ENCODE measurements at regions of chr17 and their contacts with region 1.

Region 1: DNA sequence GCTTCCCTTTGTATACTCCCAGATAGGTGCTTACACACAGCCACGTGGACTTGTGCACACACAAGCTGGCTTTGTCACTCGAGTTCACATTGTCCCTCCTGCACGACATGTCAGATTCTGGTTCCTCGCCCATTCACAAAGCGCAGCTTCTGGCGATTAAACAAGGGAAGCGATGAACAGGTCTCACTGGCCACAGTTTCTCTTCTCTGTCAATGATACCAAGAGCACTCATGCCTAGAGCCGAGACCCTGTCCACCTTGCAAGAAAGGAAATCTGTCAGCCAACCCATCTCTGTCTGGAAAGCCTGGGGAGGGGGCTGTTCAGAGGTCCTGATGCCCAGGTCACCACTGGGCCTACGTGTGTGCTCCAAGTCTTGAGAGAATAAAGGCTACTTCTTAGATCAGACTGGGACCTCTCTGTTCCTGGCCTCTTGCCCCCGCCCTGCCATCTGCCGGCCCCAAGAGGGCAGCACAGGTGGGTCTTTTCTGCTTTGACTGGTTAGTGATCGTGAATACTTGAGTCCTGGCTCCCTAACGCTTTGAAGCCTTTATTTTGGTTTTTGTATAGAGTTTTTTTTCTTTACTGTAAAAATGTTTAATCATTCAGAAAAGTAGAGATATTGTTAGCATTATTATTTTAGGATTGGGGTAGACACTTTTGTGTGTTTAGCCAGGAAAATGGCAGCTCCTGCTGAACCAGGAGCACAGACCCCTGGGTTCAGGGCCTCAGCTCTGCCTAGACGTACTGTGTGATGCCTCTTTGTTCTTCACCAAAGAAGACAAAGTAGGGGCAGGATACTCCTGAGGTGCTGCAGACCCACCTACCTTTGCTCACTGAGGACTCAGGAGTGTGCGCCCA is 104.7 kb downstream of the MRM1 start:
- DNase-seq: peak; percentile 78
- ATAC-seq: peak; percentile 92
- H3K4me3 Mint-ChIP-seq: no peak overlapping the region
- H3K27ac Mint-ChIP-seq: no peak overlapping the region
- H3K4me1 Mint-ChIP-seq: no peaks in the 10 kb centered on the region
- H3K27me3 Mint-ChIP-seq: peaks cover 26% of the 10 kb centered on the region

Region 2: DNA sequence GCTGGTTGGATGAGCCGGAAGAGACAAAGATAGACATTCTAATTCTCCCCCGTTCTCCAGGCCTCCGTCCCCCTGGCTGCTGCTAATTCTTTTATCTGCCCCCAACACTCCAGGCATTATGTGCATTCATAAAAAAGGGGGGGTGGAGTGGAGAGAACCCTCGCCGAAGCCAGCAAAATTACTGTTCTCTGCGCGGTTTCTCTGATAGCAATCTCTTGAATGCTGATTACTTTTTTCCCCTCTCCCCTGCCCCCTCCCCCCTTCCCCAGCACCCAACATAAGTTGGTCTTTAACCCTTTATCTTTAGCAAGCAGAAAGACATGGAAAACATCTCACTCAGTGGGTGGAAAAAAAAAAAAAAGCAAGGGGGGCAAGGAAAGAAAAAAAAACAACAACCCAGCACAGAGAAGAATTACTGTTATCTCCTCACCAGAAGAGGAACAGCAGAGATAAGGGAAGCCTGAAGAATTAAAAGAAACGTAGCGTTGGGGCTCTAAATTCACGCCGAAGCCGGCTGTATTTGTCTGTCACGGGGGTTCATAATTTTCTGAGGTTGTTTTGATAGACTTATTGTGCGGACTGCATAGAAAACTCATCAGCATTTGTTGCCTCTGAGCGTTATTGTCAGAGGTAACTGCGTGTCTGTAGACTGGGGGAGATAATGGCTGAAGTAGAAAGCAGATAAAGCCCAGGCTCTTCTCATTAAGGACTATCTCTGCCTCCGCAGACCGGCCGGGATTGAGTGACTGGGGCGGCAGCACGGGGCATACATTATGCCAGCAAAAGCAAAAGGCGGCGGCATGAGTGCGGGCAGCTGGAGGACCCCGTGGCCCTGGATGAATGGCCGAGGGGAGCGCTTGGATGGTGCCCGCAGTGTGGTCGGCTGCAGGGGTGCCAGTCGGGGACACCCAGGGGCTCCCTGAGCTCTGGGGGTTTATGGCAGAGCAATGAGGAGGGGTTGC is 22.2 kb after region 1 on chr17:
- CTCF ChIA-PET with region 1: no interaction called
- POLR2A ChIA-PET with region 1: no interaction called
- intact Hi-C with region 1: no loop called
- DNase-seq: peak; percentile 65
- ATAC-seq: peak; percentile 69
- H3K4me3 Mint-ChIP-seq: peak overlapping the region; percentile 22
- H3K27ac Mint-ChIP-seq: peak overlapping the region; percentile 11
- H3K4me1 Mint-ChIP-seq: peaks cover 42% of the 10 kb centered on the region
- H3K27me3 Mint-ChIP-seq: no peaks in the 10 kb centered on the region

Region 3: DNA sequence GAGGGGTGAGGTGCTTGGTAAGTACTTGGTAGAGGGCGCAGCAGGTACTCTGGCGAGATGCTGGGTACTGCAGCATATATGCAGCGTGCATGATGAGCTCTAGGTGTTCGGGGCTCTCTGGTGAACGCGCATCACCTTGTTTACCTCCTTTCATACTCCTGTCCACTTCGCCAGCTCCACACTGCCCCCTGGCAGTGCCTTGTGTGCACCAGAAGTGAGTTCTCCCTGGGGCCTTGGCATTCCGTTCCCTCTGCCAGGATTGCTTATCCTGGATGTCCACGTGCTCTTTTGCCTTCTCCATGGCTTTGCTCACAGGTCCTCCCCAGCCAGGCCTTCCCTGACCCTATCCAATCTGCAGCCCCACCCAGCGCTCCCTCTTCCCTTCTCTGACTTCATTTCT is 49.5 kb after region 1 on chr17:
- CTCF ChIA-PET with region 1: interaction called, 4 read pairs
- POLR2A ChIA-PET with region 1: no interaction called
- intact Hi-C with region 1: loop called in 1 of 2 experiments (anchors 1 kb)
- DNase-seq: peak; percentile 69
- ATAC-seq: peak; percentile 51
- H3K4me3 Mint-ChIP-seq: no peak overlapping the region
- H3K27ac Mint-ChIP-seq: no peak overlapping the region
- H3K4me1 Mint-ChIP-seq: no peaks in the 10 kb centered on the region
- H3K27me3 Mint-ChIP-seq: no peaks in the 10 kb centered on the region